B cell (primary cell): ENCODE measurements at regions of chr5 and their contacts with region 1.

Region 1: DNA sequence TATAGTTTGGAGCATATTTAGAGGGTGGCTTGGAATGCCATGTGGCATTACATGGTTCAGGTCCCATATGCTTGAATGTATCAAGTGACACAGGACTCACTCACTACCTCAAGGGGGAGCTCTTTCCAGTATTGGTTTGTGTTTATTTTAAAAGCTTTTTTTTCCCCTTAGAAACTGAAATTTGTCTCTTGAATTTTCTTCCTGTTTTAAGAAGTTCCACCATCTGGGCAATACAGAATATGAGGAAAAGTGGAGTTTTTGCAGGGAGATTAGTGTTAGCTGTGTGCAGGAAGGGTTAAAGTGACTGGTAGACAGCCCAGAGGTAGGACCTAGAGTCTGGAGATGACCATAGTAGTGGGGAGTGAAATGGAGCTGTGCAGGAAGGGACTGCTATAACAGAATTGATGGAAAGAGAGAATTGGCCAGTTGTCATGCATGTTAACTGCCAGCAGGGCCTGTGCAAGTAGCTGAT is 36.6 kb downstream of the CTNNA1 start:
- DNase-seq: peak; percentile 34
- ATAC-seq: no peak
- H3K4me3 ChIP-seq: no peak overlapping the region
- H3K4me3 Mint-ChIP-seq: no peak overlapping the region
- H3K27ac ChIP-seq: no peak overlapping the region
- H3K27ac Mint-ChIP-seq: no peak overlapping the region
- H3K4me1 ChIP-seq: peaks cover 3 to 4% of the 10 kb centered on the region in 2 donors
- H3K4me1 Mint-ChIP-seq: peaks cover 8% of the 10 kb centered on the region
- H3K27me3 ChIP-seq: no peaks in the 10 kb centered on the region
- H3K27me3 Mint-ChIP-seq: no peaks in the 10 kb centered on the region
- CTCF ChIP-seq: peak; percentile 74

Region 2: GRCh38 chr5:138402640-138403039 is 387.2 kb before region 1 on chr5:
- CTCF ChIA-PET with region 1: no interaction called
- POLR2A ChIA-PET with region 1: no interaction called
- intact Hi-C with region 1: no loop called
- DNase-seq: no peak
- ATAC-seq: no peak
- H3K4me3 ChIP-seq: no peak overlapping the region
- H3K4me3 Mint-ChIP-seq: no peak overlapping the region
- H3K27ac ChIP-seq: no peak overlapping the region
- H3K27ac Mint-ChIP-seq: no peak overlapping the region
- H3K4me1 ChIP-seq: peaks cover 2 to 3% of the 10 kb centered on the region in 2 donors
- H3K4me1 Mint-ChIP-seq: peaks cover 6% of the 10 kb centered on the region
- H3K27me3 ChIP-seq: no peaks in the 10 kb centered on the region
- H3K27me3 Mint-ChIP-seq: no peaks in the 10 kb centered on the region
- CTCF ChIP-seq: no peak

Region 3: DNA sequence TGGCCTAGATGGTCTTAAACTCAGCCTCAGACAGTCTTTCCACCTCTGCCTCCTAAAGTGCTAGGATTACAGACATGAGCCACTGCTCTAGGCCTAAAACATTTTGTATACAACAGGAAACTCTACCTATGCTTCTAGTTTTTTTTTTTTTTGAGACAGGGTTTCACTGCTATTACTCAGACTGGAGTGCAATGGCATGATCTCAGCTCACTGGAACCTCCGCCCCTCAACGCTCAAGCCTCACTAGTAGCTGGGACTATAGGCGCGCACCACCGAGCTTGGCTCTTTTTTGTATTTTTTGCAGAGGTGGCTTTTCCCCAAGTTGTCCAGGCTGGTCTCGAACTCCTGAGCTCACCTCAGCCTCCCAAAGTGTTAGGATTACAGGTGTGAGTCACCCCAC is 220.0 kb before region 1 on chr5:
- CTCF ChIA-PET with region 1: no interaction called
- POLR2A ChIA-PET with region 1: no interaction called
- intact Hi-C with region 1: no loop called
- DNase-seq: no peak
- ATAC-seq: no peak
- H3K4me3 ChIP-seq: no peak overlapping the region
- H3K4me3 Mint-ChIP-seq: no peak overlapping the region
- H3K27ac ChIP-seq: no peak overlapping the region
- H3K27ac Mint-ChIP-seq: no peak overlapping the region
- H3K4me1 ChIP-seq: peaks cover 8 to 12% of the 10 kb centered on the region in 2 donors
- H3K4me1 Mint-ChIP-seq: peaks cover 22% of the 10 kb centered on the region
- H3K27me3 ChIP-seq: no peaks in the 10 kb centered on the region
- H3K27me3 Mint-ChIP-seq: no peaks in the 10 kb centered on the region
- CTCF ChIP-seq: no peak

Region 4: DNA sequence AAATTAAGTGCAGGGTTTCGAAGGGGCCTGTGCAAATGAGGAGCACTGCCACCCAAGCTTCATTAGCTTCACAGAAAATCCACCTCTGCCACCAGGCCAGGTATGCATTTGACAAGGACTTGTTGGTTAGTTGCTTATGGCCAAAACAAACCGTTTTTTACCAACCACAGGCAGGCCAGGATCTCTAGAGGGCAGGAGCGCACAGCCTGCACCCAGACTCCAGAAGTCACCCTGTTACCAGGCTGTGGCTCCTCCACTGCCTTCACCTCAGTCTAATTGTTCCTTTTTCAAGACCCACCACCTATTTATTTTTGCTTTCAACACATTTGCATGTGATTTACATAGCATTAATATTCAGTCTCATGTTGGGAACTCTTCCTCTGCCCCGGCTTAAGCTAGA is 136.3 kb before region 1 on chr5:
- CTCF ChIA-PET with region 1: no interaction called
- POLR2A ChIA-PET with region 1: no interaction called
- intact Hi-C with region 1: no loop called
- DNase-seq: peak; percentile 24
- ATAC-seq: no peak
- H3K4me3 ChIP-seq: no peak overlapping the region
- H3K4me3 Mint-ChIP-seq: no peak overlapping the region
- H3K27ac ChIP-seq: no peak overlapping the region
- H3K27ac Mint-ChIP-seq: peak overlapping the region; percentile 26
- H3K4me1 ChIP-seq: peaks cover 28 to 40% of the 10 kb centered on the region in 2 donors
- H3K4me1 Mint-ChIP-seq: peaks cover 37% of the 10 kb centered on the region
- H3K27me3 ChIP-seq: peaks cover 0 to 77% (median 46%) of the 10 kb centered on the region in 4 experiments
- H3K27me3 Mint-ChIP-seq: peaks cover 63% of the 10 kb centered on the region
- CTCF ChIP-seq: no peak

Region 5: GRCh38 chr5:138805096-138805495 is 15.3 kb after region 1 on chr5:
- CTCF ChIA-PET with region 1: interaction called, 10 read pairs
- POLR2A ChIA-PET with region 1: no interaction called
- intact Hi-C with region 1: no loop called
- DNase-seq: no peak
- ATAC-seq: no peak
- H3K4me3 ChIP-seq: no peak overlapping the region
- H3K4me3 Mint-ChIP-seq: no peak overlapping the region
- H3K27ac ChIP-seq: no peak overlapping the region
- H3K27ac Mint-ChIP-seq: no peak overlapping the region
- H3K4me1 ChIP-seq: peaks cover 0 to 4% of the 10 kb centered on the region in 2 donors
- H3K4me1 Mint-ChIP-seq: peaks cover 9% of the 10 kb centered on the region
- H3K27me3 ChIP-seq: no peaks in the 10 kb centered on the region
- H3K27me3 Mint-ChIP-seq: no peaks in the 10 kb centered on the region
- CTCF ChIP-seq: no peak